Activated naive CD8-positive, alpha-beta T cell treated with anti-CD3 and anti-CD28 coated beads, Interleukin-2, amount 10 ng/mL, durations not matched to agents 7 days and 5 days (primary cell): ENCODE measurements at regions of chr10 and their contacts with region 1.

Region 1: DNA sequence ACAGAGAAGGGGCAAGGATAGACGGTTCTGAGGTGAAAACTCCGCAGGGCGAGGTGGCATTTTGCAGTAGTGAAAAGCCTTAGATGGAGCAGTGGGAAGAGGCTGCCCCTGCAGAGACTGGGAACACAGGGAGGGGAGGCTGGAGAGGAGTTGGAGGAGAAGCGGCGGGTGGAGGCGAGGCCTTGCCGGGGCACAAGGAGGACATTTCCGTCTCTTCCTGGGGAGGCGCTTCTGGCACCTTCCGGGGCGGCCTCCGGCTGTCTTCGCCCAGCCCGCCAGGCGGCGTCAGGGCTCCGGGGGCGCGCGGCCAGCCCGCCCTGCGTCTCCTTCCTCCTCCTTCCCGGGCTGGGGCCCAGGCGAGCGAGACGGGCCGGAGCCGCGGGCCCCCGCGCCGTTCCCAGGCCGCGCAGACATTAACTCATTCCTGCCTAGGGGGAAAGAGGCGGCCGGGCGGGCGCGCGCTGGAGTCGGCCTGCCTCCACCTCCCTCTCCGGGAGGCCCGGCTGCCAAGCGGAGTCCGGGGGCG is 42.7 kb downstream of the LDB3 start:
- DNase-seq: peak; percentile 92
- ATAC-seq: peak; percentile 94
- H3K4me3 Mint-ChIP-seq: peak overlapping the region; percentile 91
- H3K27ac Mint-ChIP-seq: peak overlapping the region; percentile 95
- H3K4me1 Mint-ChIP-seq: peaks cover 12% of the 10 kb centered on the region
- H3K27me3 Mint-ChIP-seq: no peaks in the 10 kb centered on the region

Region 2: DNA sequence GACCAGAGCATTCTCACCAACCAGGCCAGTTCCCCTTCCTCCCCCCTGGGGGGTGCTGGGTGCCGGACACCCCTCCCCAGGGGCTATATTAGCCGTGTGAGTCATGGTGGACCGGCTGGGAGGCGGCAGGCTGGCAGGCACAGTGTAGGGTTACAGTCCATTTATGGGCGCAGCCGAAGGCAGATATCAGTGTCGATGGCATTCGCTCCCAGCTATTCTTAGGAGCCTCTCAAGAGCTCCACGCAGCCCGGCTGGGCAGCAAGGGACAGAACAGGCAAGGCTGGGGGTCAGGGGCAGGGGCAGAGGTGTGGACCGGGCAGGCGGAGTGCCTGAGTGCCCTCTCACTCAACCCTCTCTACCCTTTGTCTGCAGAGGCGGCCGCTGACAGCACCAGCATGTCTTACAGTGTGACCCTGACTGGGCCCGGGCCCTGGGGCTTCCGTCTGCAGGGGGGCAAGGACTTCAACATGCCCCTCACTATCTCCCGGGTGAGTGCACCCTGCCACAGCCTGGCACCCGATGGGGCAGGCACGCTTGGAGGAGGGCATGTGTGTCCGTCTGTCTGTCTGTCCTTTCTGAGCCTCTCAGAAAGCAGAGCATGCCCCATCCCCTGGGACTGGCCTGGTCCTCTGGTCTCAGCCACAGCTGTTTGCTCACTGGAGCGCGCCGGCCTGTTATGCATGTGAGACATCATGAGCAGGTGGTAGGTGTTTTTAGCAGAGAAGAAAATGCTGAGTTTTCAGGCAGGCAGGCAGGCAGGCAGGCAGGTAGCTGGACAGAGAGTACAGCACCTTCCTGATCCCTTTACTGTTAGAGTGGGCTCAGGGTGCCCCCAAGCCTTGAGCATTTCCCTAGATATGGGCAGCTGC is 42.5 kb before region 1 on chr10 and contains the start of gene LDB3:
- POLR2A ChIA-PET with region 1: no interaction called
- DNase-seq: no peak
- ATAC-seq: no peak
- H3K4me3 Mint-ChIP-seq: no peak within 1 kb of the TSS
- H3K27ac Mint-ChIP-seq: no peak within 1 kb of the TSS
- H3K4me1 Mint-ChIP-seq: no peaks in the 10 kb centered on the region
- H3K27me3 Mint-ChIP-seq: no peaks in the 10 kb centered on the region
- total RNA-seq, gene LDB3: not detected

Region 3: DNA sequence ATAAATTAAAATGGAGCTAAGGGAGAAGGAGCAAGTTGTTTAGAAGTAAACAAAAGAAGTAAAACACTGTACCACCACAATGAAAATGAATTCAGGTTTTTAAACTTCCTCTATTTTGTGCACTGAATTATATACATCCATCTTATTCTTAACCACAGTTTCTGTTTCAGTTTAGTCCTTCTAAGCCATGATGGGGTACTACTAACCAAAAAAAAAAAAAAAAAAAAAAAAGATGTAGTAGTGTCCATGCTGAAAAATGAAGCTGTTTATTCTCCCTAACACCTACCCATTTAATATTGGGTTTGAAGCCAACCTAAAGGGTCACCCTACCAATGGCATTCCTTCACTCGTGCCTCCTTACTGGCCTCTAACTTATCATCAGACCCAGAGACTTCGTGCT is 42.0 kb after region 1 on chr10:
- POLR2A ChIA-PET with region 1: interaction called, 11 read pairs
- DNase-seq: no peak
- ATAC-seq: no peak
- H3K4me3 Mint-ChIP-seq: peak overlapping the region; percentile 48
- H3K27ac Mint-ChIP-seq: peak overlapping the region; percentile 37
- H3K4me1 Mint-ChIP-seq: peaks cover 23% of the 10 kb centered on the region
- H3K27me3 Mint-ChIP-seq: peaks cover 15% of the 10 kb centered on the region